Caco-2 (cell line): ENCODE measurements at regions of chr3 and their contacts with region 1.

Region 1: DNA sequence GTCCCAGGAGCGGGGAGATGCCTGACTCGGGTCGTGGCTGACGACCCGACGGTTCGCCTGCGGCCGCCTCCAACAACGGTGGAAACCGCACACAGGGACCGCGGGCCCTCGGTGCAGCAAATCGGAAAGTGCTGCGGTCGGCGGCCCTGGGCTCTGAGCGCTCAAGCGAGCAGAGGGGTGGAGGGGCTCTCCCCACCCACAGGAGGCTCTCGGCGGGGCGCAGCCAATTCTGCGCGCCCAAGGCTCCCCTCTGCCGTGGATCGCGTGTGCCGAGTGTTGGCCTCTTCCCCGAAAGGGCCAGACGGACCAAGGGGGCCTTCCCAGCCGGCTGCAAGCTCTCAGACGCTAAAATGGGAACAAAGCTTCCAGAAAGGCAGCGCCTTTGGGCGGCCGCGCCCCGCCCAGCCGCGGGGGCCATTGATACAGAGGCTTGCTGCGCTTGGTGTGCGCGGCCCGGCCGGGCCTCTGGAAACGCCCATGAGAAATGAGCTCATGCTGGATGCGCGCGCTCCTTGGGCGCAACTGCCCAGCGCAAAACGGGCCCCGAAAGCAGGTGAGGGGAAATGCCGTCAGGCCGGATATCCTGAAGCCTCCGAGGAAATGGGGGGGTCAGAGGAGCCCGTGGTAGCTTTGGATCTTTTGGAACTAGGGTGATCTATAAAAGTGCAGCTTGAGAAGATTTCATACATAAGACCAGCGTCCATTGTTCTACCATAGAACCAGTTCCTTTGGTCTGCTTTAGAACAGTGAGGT is 1.2 kb upstream of the GSK3B start:
- DNase-seq: peak; percentile 91 to 92
- H3K4me3 ChIP-seq: peak overlapping the region; percentile 91
- H3K4me3 Mint-ChIP-seq: no peak overlapping the region
- H3K27ac Mint-ChIP-seq: no peak overlapping the region
- H3K4me1 ChIP-seq: peaks cover 25% of the 10 kb centered on the region
- H3K4me1 Mint-ChIP-seq: peaks cover 17% of the 10 kb centered on the region
- H3K27me3 ChIP-seq: no peaks in the 10 kb centered on the region
- H3K27me3 Mint-ChIP-seq: no peaks in the 10 kb centered on the region
- CTCF ChIP-seq: no peak

Region 2: DNA sequence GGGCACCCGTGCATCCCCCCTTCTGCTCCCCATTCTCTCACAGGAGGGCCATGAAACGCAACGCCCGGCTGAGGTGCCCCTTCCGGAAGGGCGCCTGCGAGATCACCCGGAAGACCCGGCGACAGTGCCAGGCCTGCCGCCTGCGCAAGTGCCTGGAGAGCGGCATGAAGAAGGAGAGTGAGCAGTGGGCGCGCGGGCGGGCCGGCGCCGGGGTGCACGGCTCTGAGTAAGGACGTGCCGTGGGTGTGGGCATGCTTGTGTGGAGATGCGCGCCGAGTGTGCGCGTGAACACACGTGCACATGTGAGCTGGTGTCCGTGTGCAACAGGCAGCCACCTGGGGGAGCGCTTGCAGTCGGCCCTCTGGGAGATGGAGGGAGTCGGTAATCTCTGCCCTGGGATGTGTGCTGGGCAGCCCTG is 285.4 kb before region 1 on chr3:
- CTCF ChIA-PET with region 1: no interaction called
- POLR2A ChIA-PET with region 1: no interaction called
- intact Hi-C with region 1: loop called (anchors 10 kb)
- DNase-seq: no peak
- H3K4me3 ChIP-seq: no peak overlapping the region
- H3K4me3 Mint-ChIP-seq: no peak overlapping the region
- H3K27ac Mint-ChIP-seq: no peak overlapping the region
- H3K4me1 ChIP-seq: no peaks in the 10 kb centered on the region
- H3K4me1 Mint-ChIP-seq: no peaks in the 10 kb centered on the region
- H3K27me3 ChIP-seq: no peaks in the 10 kb centered on the region
- H3K27me3 Mint-ChIP-seq: no peaks in the 10 kb centered on the region
- CTCF ChIP-seq: no peak

Region 3: GRCh38 chr3:120040813-120041377 is 54.5 kb before region 1 on chr3:
- CTCF ChIA-PET with region 1: no interaction called
- POLR2A ChIA-PET with region 1: no interaction called
- intact Hi-C with region 1: no loop called
- DNase-seq: no peak
- H3K4me3 ChIP-seq: no peak overlapping the region
- H3K4me3 Mint-ChIP-seq: no peak overlapping the region
- H3K27ac Mint-ChIP-seq: no peak overlapping the region
- H3K4me1 ChIP-seq: no peaks in the 10 kb centered on the region
- H3K4me1 Mint-ChIP-seq: no peaks in the 10 kb centered on the region
- H3K27me3 ChIP-seq: no peaks in the 10 kb centered on the region
- H3K27me3 Mint-ChIP-seq: no peaks in the 10 kb centered on the region
- CTCF ChIP-seq: no peak

Region 4: GRCh38 chr3:120057626-120058025 is 37.8 kb before region 1 on chr3:
- CTCF ChIA-PET with region 1: no interaction called
- POLR2A ChIA-PET with region 1: interaction called, 10 read pairs
- intact Hi-C with region 1: no loop called
- DNase-seq: no peak
- H3K4me3 ChIP-seq: no peak overlapping the region
- H3K4me3 Mint-ChIP-seq: no peak overlapping the region
- H3K27ac Mint-ChIP-seq: no peak overlapping the region
- H3K4me1 ChIP-seq: no peaks in the 10 kb centered on the region
- H3K4me1 Mint-ChIP-seq: peaks cover 5% of the 10 kb centered on the region
- H3K27me3 ChIP-seq: no peaks in the 10 kb centered on the region
- H3K27me3 Mint-ChIP-seq: no peaks in the 10 kb centered on the region
- CTCF ChIP-seq: no peak

Region 5: GRCh38 chr3:120160050-120160449 is 64.6 kb after region 1 on chr3:
- CTCF ChIA-PET with region 1: interaction called, 9 read pairs
- POLR2A ChIA-PET with region 1: interaction called, 48 read pairs
- intact Hi-C with region 1: loop called (anchors 1 kb)
- DNase-seq: peak; percentile 91 to 93
- H3K4me3 ChIP-seq: no peak overlapping the region
- H3K4me3 Mint-ChIP-seq: peak overlapping the region; percentile 38
- H3K27ac Mint-ChIP-seq: peak overlapping the region; percentile 90
- H3K4me1 ChIP-seq: peaks cover 58% of the 10 kb centered on the region
- H3K4me1 Mint-ChIP-seq: peaks cover 52% of the 10 kb centered on the region
- H3K27me3 ChIP-seq: no peaks in the 10 kb centered on the region; the same call in 1 of the 2 replicates
- H3K27me3 Mint-ChIP-seq: no peaks in the 10 kb centered on the region
- CTCF ChIP-seq: no peak

Region 6: GRCh38 chr3:120214161-120214560 is 118.8 kb after region 1 on chr3:
- CTCF ChIA-PET with region 1: no interaction called
- POLR2A ChIA-PET with region 1: no interaction called
- intact Hi-C with region 1: no loop called
- DNase-seq: no peak
- H3K4me3 ChIP-seq: no peak overlapping the region
- H3K4me3 Mint-ChIP-seq: no peak overlapping the region
- H3K27ac Mint-ChIP-seq: no peak overlapping the region
- H3K4me1 ChIP-seq: no peaks in the 10 kb centered on the region
- H3K4me1 Mint-ChIP-seq: no peaks in the 10 kb centered on the region
- H3K27me3 ChIP-seq: no peaks in the 10 kb centered on the region
- H3K27me3 Mint-ChIP-seq: no peaks in the 10 kb centered on the region
- CTCF ChIP-seq: no peak

Region 7: GRCh38 chr3:120348981-120349818 is 253.8 kb after region 1 on chr3 and contains the start of gene LRRC58:
- CTCF ChIA-PET with region 1: no interaction called
- POLR2A ChIA-PET with region 1: interaction called, 13 read pairs
- intact Hi-C with region 1: no loop called
- DNase-seq: peak; percentile 87 to 91
- H3K4me3 ChIP-seq: peak within 1 kb of the TSS; percentile 94
- H3K4me3 Mint-ChIP-seq: peak within 1 kb of the TSS; percentile 82
- H3K27ac Mint-ChIP-seq: peak within 1 kb of the TSS; percentile 87
- H3K4me1 ChIP-seq: peaks cover 8% of the 10 kb centered on the region
- H3K4me1 Mint-ChIP-seq: peaks cover 21% of the 10 kb centered on the region
- H3K27me3 ChIP-seq: no peaks in the 10 kb centered on the region; the same call in 1 of the 2 replicates
- H3K27me3 Mint-ChIP-seq: no peaks in the 10 kb centered on the region
- CTCF ChIP-seq: peak in 1 of 2 experiments; percentile 8
- total RNA-seq, gene LRRC58: 19.8 and 20.5 TPM in 2 replicates